ENCODE measurements at regions of chr2 and their contacts with region 1.

Region 1: GRCh38 chr2:207746131-207746530 is 23.6 kb downstream of the FZD5 start:
- DNase-seq: no peak
- H3K4me3 ChIP-seq: no peak overlapping the region
- H3K27ac ChIP-seq: no peak overlapping the region
- H3K4me1 ChIP-seq: no peaks in the 10 kb centered on the region
- H3K27me3 ChIP-seq: no peaks in the 10 kb centered on the region
- CTCF ChIP-seq: peak; percentile 36 to 90 (median 82)
- POLR2A ChIP-seq: no peak

Region 2: GRCh38 chr2:208033758-208034502 is 287.8 kb after region 1 on chr2:
- intact Hi-C with region 1: loop called (anchors 10 kb)
- DNase-seq: peak in 1 of 2 donors; percentile 26
- H3K4me3 ChIP-seq: no peak overlapping the region
- H3K27ac ChIP-seq: no peak overlapping the region
- H3K4me1 ChIP-seq: no peaks in the 10 kb centered on the region
- H3K27me3 ChIP-seq: no peaks in the 10 kb centered on the region
- CTCF ChIP-seq: peak in 1 of 3 donors; percentile 24
- POLR2A ChIP-seq: no peak

Region 3: DNA sequence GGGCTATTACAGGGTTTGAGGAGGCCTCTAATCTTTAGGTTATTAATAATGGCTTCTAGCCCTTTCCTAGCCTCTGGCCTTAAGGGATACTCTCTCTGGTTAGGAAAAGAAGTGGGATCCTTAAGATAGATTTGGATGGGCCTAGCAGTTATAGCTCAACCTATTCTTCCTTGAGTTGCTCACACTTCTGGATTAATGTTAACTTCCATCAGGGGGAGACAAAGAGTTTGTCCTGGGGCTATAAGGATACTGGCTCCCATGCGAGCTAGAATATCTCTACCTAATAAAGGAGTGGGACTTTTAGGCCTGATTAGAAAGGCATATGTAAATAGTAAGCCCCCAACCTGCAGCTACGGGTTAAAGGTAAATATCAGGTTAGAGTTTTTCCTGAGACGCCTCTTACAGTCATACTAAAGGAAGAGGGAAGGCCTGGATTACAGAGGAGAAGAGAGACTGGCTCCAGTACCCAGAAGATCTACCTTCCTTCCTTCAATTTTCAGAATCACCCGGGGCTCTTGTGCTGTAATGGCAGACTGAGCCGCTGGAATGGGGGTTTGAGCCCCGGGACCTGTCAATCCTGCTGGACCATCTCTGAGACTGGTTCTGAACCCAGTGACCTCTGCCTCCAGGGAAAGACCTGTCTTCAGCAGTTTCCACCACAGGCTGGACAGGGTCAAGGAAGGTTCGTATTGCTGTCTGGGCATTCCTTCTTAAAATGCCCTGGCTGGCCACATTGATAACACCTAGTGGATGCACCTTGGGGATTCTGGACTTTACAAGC is 646.4 kb after region 1 on chr2:
- intact Hi-C with region 1: no loop called
- DNase-seq: no peak
- H3K4me3 ChIP-seq: no peak overlapping the region
- H3K27ac ChIP-seq: no peak overlapping the region
- H3K4me1 ChIP-seq: no peaks in the 10 kb centered on the region
- H3K27me3 ChIP-seq: no peaks in the 10 kb centered on the region
- CTCF ChIP-seq: no peak
- POLR2A ChIP-seq: no peak

Measured in breast epithelium (tissue), 4 donors.